ENCODE measurements at regions of chr1 and their contacts with region 1.

Region 1: DNA sequence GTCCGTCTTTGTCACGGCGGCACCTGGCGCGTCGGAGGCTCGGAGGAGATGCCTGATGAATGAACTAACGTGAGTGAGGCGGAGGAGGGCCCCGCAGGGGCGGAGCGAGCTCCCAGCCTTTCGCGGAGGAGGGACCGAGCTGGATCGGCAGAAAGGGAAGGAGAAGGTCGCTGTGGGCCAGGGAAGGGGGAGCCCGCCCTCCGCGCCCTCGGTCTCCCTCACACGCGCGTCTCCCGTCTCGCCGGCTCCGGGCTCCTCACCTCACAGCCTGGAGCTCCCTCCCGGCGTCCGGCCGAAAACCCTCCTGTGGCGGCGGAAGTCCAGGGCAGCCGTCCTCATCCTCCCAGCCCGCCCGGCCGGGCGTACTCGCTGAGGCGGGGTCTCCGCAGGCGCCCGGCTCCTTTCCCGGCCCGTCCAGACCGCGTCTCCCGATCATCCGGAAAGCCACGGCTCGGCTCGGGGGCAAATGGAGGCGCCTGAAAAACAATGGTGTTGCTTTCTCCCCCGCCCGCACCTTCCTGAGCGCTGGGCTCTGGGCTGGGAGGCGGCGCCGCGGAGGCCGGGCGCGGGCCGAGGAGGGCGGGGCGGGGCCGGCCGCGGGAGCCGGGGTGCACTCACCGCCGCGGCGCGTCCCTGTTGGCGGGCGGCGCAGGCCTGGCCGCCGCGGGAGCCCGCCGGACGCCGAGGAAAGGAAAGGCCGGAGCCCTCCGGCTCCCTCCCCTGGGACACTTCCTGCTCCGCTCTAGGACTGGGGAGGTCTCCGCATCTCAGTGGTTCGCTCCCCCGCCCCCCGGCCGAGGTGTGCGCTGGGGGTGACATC is at the start of gene ZNF496:
- DNase-seq: no peak
- ATAC-seq: peak; percentile 87
- H3K4me3 ChIP-seq: peak within 1 kb of the TSS; percentile 65 to 91
- H3K27ac ChIP-seq: peak within 1 kb of the TSS; percentile 81
- H3K4me1 ChIP-seq: peaks cover 12% of the 10 kb centered on the region
- H3K27me3 ChIP-seq: no peaks in the 10 kb centered on the region
- CTCF ChIP-seq: no peak
- total RNA-seq, gene ZNF496: 21.4 TPM

Region 2: GRCh38 chr1:246343251-246343650 is 988.1 kb before region 1 on chr1:
- CTCF ChIA-PET with region 1: no interaction called
- POLR2A ChIA-PET with region 1: no interaction called
- in situ Hi-C with region 1: no loop called
- intact Hi-C with region 1: no loop called
- DNase-seq: no peak
- ATAC-seq: no peak
- H3K4me3 ChIP-seq: no peak overlapping the region
- H3K27ac ChIP-seq: no peak overlapping the region
- H3K4me1 ChIP-seq: no peaks in the 10 kb centered on the region
- H3K27me3 ChIP-seq: no peaks in the 10 kb centered on the region
- CTCF ChIP-seq: no peak

Region 3: GRCh38 chr1:247210376-247211117 is 120.8 kb before region 1 on chr1:
- CTCF ChIA-PET with region 1: no interaction called
- POLR2A ChIA-PET with region 1: no interaction called
- in situ Hi-C with region 1: no loop called
- intact Hi-C with region 1: loop called (anchors 10 kb)
- DNase-seq: peak; percentile 72
- ATAC-seq: peak; percentile 100
- H3K4me3 ChIP-seq: peak overlapping the region; percentile 70 to 92
- H3K27ac ChIP-seq: peak overlapping the region; percentile 81
- H3K4me1 ChIP-seq: peaks cover 18% of the 10 kb centered on the region
- H3K27me3 ChIP-seq: peaks cover 3% of the 10 kb centered on the region; the same call in 1 of the 2 replicates
- CTCF ChIP-seq: no peak

Region 4: DNA sequence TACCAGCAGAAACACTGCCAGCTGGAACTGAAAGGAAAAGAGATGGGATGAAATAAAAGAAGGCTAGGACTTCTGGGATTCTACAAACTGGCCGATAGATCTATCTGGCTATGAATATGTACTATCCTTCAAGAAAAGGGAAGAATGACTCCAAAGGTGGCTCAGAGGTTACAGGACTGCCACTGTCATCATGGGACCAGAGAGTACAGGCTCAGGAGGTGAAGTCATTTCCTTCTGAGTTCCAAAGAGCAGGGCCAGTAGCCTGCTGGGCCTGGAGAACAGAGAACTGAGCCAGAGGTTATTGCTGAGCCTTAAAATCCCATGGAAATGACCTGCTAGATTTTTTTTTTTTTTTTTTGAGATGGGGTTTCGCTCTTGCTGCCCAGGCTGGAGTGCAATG is 27.4 kb before region 1 on chr1:
- CTCF ChIA-PET with region 1: no interaction called
- POLR2A ChIA-PET with region 1: no interaction called
- in situ Hi-C with region 1: no loop called
- intact Hi-C with region 1: no loop called
- DNase-seq: no peak
- ATAC-seq: no peak
- H3K4me3 ChIP-seq: no peak overlapping the region
- H3K27ac ChIP-seq: no peak overlapping the region
- H3K4me1 ChIP-seq: no peaks in the 10 kb centered on the region
- H3K27me3 ChIP-seq: no peaks in the 10 kb centered on the region
- CTCF ChIP-seq: no peak

Region 5: GRCh38 chr1:247350587-247350986 is 19.2 kb after region 1 on chr1:
- CTCF ChIA-PET with region 1: no interaction called
- POLR2A ChIA-PET with region 1: interaction called, 11 read pairs
- in situ Hi-C with region 1: no loop called
- intact Hi-C with region 1: no loop called
- DNase-seq: no peak
- ATAC-seq: no peak
- H3K4me3 ChIP-seq: no peak overlapping the region
- H3K27ac ChIP-seq: no peak overlapping the region
- H3K4me1 ChIP-seq: no peaks in the 10 kb centered on the region
- H3K27me3 ChIP-seq: peaks cover under 1% of the 10 kb centered on the region
- CTCF ChIP-seq: no peak

Measured in Panc1 (cell line).